ENCODE measurements at regions of chr6 and their contacts with region 1.

Region 1: GRCh38 chr6:38570750-38571149 is 69.0 kb downstream of the BTBD9 start:
- H3K4me3 ChIP-seq: no peak overlapping the region
- H3K27ac ChIP-seq: no peak overlapping the region
- H3K4me1 ChIP-seq: peaks cover 7% of the 10 kb centered on the region; the same call in 1 of the 2 replicates
- CTCF ChIP-seq: 0 out of 2 replicates have a peak, but pooled peaks have one; percentile 20

Region 2: DNA sequence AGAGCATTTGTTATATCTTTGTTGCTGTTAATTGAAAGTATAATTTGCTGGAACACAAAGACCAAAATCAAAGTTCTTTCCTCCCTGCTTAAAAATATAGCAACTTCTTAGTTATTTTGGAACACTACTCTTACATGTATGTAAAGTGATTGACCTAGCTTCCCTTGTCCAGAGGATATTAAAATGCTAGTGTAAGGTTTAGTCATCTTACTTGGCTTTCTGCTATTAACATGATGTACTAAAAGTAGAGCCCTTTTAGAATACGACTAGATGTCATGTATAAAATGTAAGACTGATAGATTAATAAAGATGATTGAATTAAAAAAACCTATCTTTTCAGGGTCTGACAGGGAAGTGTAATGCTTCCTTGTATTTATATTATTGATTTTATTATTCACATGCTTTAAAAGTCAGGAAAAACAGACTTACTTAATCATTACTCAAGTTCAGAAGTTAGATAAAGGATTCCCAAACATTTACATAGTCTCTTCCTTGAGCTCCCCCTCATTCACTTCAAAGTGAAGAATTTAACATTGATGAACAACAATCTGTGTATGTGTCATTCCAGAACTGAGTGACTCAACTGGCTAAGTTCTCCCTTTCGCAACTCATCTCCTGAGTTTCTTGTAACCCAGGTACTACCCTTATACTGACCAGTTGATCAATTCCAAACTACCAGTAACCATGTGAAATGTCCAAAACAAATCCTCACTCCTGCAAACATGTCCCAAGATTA is 18.0 kb after region 1 on chr6:
- CTCF ChIA-PET with region 1: interaction called, 10 read pairs
- POLR2A ChIA-PET with region 1: no interaction called
- H3K4me3 ChIP-seq: no peak overlapping the region
- H3K27ac ChIP-seq: no peak overlapping the region
- H3K4me1 ChIP-seq: no peaks in the 10 kb centered on the region
- CTCF ChIP-seq: no peak